ENCODE measurements at regions of chr19 and their contacts with region 1.

Region 1: DNA sequence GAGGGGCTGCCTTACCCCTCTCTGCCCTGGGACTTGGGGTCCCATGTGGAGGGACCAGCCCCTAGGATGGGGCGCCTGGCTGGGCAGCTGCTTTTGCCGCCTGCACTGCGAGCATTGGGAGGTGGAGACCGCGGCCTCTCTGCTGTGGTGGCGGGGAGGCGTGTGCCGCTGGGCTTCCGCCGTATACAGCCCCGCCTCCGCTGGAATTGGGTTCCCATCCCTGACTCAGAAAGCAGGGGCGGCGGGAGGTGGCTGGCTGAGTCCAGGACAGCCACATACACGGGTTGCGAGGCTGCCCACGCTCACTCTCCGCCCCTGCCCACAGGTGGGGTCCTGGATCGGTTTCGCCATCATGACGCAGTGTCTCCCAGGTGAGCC is 6.6 kb downstream of the NDUFB7 start:
- DNase-seq: no peak
- H3K4me3 ChIP-seq: no peak overlapping the region
- H3K27ac ChIP-seq: no peak overlapping the region
- H3K4me1 ChIP-seq: peaks cover 0 to 48% (median 35%) of the 10 kb centered on the region in 4 donors
- H3K27me3 ChIP-seq: no peaks in the 10 kb centered on the region
- CTCF ChIP-seq: no peak

Region 2: DNA sequence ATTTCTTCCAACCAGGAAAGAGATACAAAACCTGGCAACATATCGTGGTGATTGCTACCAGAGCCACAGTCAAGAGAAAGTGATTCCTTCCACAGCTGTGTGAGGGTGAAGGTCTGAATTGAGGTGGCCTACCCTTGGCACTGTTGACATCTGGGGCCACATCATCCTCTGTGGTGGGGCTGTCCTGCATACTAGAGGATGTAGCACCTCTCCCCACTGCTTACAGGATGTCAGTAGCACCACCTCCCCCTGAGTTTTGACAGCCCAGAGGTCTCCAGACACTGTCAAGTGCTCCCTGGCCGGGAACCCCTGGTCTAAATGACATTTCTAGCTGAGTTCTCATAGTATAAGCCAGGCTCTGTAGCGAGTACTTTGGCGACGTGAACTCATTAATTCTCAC is 105.6 kb before region 1 on chr19:
- intact Hi-C with region 1: no loop called
- DNase-seq: no peak
- H3K4me3 ChIP-seq: no peak overlapping the region
- H3K27ac ChIP-seq: no peak overlapping the region
- H3K4me1 ChIP-seq: no peaks in the 10 kb centered on the region
- H3K27me3 ChIP-seq: no peaks in the 10 kb centered on the region
- CTCF ChIP-seq: no peak

Region 3: GRCh38 chr19:14479975-14480699 is 85.1 kb before region 1 on chr19:
- intact Hi-C with region 1: no loop called
- DNase-seq: no peak
- H3K4me3 ChIP-seq: no peak overlapping the region
- H3K27ac ChIP-seq: no peak overlapping the region
- H3K4me1 ChIP-seq: peaks cover 7 to 14% (median 9%) of the 10 kb centered on the region in 4 donors
- H3K27me3 ChIP-seq: peaks cover 0 to 9% of the 10 kb centered on the region in 2 donors
- CTCF ChIP-seq: peak; percentile 67 to 79

Region 4: GRCh38 chr19:14517840-14518505 is 47.3 kb before region 1 on chr19 and contains the start of gene DNAJB1:
- intact Hi-C with region 1: no loop called
- DNase-seq: peak; percentile 80 to 93
- H3K4me3 ChIP-seq: peak within 1 kb of the TSS; percentile 90 to 92
- H3K27ac ChIP-seq: peak within 1 kb of the TSS; percentile 98 to 99
- H3K4me1 ChIP-seq: peaks cover 0 to 39% (median 28%) of the 10 kb centered on the region in 4 donors
- H3K27me3 ChIP-seq: no peaks in the 10 kb centered on the region
- CTCF ChIP-seq: no peak

Region 5: GRCh38 chr19:14683439-14683838 is 118.2 kb after region 1 on chr19:
- intact Hi-C with region 1: loop called (anchors 5 kb)
- DNase-seq: no peak
- H3K4me3 ChIP-seq: no peak overlapping the region
- H3K27ac ChIP-seq: no peak overlapping the region
- H3K4me1 ChIP-seq: no peaks in the 10 kb centered on the region
- H3K27me3 ChIP-seq: peaks cover 0 to 11% of the 10 kb centered on the region in 2 donors
- CTCF ChIP-seq: no peak

Measured in tibial artery (tissue), 4 donors.